ENCODE measurements at regions of chr7 and their contacts with region 1.

Region 1: DNA sequence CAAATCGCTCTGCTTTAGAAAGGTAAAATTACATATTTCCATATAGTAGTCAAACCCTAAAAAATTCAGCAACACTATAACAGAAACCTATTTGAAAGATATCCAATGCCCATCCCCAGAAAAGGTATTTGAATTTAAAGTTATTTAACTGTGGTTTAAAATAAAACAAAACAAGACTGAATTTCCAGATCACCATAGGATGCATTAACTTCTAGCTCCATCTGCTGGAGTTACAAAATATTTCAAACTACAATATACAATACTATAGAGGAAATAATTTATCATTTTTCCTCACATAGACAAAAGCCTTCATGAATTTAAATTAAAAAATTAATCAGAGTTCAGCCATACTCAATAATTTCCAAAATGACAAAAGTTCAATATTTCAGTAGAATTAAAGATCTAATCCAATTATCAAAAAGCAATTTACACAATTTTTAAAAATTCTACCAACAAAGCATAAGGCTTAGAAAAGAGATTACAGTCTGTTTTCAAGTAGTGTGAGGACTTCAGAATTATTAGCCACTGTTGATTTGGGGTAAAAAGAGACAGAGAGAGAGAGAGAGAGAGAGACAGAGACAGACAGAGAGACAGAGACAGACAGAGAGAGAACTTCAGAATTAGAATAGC is 75.9 kb downstream of the LMBR1 start:
- DNase-seq: no peak
- H3K4me3 ChIP-seq: no peak overlapping the region
- CTCF ChIP-seq: no peak

Region 2: DNA sequence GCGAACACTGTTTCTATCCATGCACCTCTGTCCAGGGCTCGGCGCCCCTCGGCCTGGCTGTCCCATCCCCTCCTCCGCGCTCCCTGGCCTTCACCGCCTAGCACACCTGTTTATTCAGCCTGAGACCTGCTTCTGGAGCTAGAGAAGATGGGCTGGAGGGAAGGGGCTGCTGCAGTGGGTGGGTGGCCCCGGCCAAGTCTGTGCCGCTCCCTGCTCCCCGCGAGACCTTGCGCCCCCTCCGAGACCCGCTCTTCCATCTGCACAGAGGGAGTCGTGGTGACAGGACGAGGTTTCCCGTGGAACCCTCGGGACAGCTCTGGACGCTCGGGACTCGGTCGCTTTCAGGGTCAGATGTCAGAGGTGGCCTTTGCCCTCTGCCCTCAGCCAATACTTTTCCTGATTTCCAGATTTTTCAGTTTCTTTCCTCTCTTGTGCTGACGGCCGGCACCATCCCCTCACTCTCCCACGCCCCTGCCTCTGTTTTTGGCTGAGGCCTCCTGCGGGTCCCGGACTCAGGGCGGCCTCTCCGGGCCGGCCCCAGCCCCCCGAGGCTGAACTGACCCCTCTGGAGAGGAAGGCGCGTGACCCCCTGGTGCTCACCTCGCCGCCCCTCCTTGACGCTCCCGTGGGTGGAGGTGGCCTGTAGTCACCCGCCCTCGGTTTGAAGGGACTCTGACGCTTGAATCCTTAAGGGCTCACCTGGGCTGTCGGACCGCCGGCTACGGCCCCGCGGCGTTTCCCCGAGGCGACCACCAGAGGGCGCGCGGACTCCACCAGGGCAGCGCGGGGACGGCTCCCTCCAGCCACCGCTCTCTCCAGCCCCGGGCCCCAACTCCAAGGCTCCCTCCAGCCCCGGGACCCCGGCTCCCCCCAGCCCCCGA is 1020.4 kb before region 1 on chr7:
- CTCF ChIA-PET with region 1: interaction called, 73 read pairs
- POLR2A ChIA-PET with region 1: no interaction called
- DNase-seq: no peak
- H3K4me3 ChIP-seq: no peak overlapping the region
- CTCF ChIP-seq: peak; percentile 98

Region 3: GRCh38 chr7:155804897-155805825 is 1011.9 kb before region 1 on chr7:
- CTCF ChIA-PET with region 1: interaction called, 10 read pairs
- POLR2A ChIA-PET with region 1: no interaction called
- DNase-seq: no peak
- H3K4me3 ChIP-seq: peak overlapping the region; percentile 46
- CTCF ChIP-seq: peak; percentile 73

Region 4: DNA sequence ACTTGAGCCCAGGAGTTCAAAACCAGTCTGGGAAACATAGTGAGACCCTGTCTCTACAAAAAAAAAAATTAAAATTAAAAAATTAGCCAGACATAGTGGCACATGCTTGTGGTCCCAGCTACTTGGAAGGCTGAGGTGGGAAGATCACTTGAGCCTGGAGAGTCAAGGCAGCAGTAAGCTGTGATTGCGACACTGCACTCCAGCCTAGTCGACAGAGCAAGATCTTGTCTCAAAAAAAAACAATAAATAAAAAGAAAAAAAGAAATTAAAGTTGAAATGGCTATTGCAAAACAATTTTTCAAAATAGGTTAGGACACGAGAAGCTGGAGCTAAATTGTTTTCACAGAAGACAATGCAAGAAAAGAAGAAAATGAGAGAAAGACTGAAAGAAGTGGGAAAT is 555.5 kb before region 1 on chr7:
- CTCF ChIA-PET with region 1: no interaction called
- POLR2A ChIA-PET with region 1: no interaction called
- DNase-seq: no peak
- H3K4me3 ChIP-seq: no peak overlapping the region
- CTCF ChIP-seq: no peak

Region 5: GRCh38 chr7:156612930-156613329 is 204.1 kb before region 1 on chr7:
- CTCF ChIA-PET with region 1: no interaction called
- POLR2A ChIA-PET with region 1: no interaction called
- DNase-seq: no peak
- H3K4me3 ChIP-seq: no peak overlapping the region
- CTCF ChIP-seq: no peak

Region 6: GRCh38 chr7:156802214-156802613 is 14.8 kb before region 1 on chr7:
- CTCF ChIA-PET with region 1: no interaction called
- POLR2A ChIA-PET with region 1: no interaction called
- DNase-seq: no peak
- H3K4me3 ChIP-seq: no peak overlapping the region
- CTCF ChIP-seq: no peak

Region 7: GRCh38 chr7:156827587-156828203 is 10.6 kb after region 1 on chr7:
- CTCF ChIA-PET with region 1: interaction called, 14 read pairs
- POLR2A ChIA-PET with region 1: no interaction called
- DNase-seq: peak; percentile 7
- H3K4me3 ChIP-seq: no peak overlapping the region
- CTCF ChIP-seq: peak; percentile 29

Region 8: DNA sequence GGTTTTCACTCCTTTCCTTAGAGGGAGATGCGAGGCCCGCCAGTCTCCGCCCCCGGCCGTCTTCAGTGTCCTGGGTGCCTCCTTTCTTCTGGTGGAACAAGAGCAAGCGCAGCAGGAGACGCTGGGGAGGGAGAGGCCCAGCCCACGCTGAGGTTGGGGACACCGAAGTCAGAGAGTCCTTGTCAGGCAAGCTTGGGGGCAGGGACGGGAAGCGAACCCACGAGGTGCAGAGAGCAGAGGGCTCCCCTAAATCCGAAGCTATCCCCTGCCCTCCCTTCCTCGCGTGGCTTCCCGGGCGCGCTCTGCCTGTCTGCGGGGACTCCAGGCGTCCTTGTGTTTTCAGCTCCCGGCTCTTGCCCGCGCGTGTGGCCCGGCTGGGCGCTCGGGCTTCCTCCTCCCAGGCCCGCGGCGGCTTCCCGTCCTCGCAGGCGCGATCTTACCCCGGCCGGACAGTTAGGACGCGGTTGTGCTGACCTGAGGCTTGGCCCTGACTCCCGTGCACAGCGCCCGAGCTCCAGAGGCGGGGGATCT is 261.1 kb after region 1 on chr7:
- CTCF ChIA-PET with region 1: no interaction called
- POLR2A ChIA-PET with region 1: no interaction called
- DNase-seq: no peak
- H3K4me3 ChIP-seq: peak overlapping the region; percentile 33
- CTCF ChIP-seq: no peak